H1 (cell line): ENCODE measurements at regions of chr11 and their contacts with region 1.

Region 1: GRCh38 chr11:78228467-78228866 is 39.7 kb downstream of the USP35 start:
- DNase-seq: no peak
- H3K4me3 ChIP-seq: no peak overlapping the region
- H3K27ac ChIP-seq: no peak overlapping the region
- H3K4me1 ChIP-seq: no peaks in the 10 kb centered on the region
- H3K27me3 ChIP-seq: no peaks in the 10 kb centered on the region
- CTCF ChIP-seq: peak in 2 of 3 experiments; percentile 63 to 75; a peak in 3 of 4 replicates
- EP300 ChIP-seq: no peak
- POLR2A ChIP-seq: no peak
- RAD21 ChIP-seq: peak; percentile 87 to 93

Region 2: GRCh38 chr11:78216571-78217287 is 11.7 kb before region 1 on chr11:
- CTCF ChIA-PET with region 1: interaction called, 38 read pairs
- POLR2A ChIA-PET with region 1: no interaction called
- DNase-seq: no peak
- H3K4me3 ChIP-seq: no peak overlapping the region
- H3K27ac ChIP-seq: no peak overlapping the region
- H3K4me1 ChIP-seq: no peaks in the 10 kb centered on the region
- H3K27me3 ChIP-seq: no peaks in the 10 kb centered on the region
- CTCF ChIP-seq: no peak
- EP300 ChIP-seq: no peak
- POLR2A ChIP-seq: no peak
- RAD21 ChIP-seq: no peak

Region 3: GRCh38 chr11:78239781-78240180 is 11.3 kb after region 1 on chr11:
- CTCF ChIA-PET with region 1: interaction called, 11 read pairs
- POLR2A ChIA-PET with region 1: no interaction called
- DNase-seq: no peak
- H3K4me3 ChIP-seq: no peak overlapping the region
- H3K27ac ChIP-seq: no peak overlapping the region
- H3K4me1 ChIP-seq: no peaks in the 10 kb centered on the region
- H3K27me3 ChIP-seq: no peaks in the 10 kb centered on the region
- CTCF ChIP-seq: no peak
- EP300 ChIP-seq: no peak
- POLR2A ChIP-seq: no peak
- RAD21 ChIP-seq: no peak

Region 4: GRCh38 chr11:78416305-78417178 is 188.1 kb after region 1 on chr11:
- CTCF ChIA-PET with region 1: interaction called, 11 read pairs
- POLR2A ChIA-PET with region 1: interaction called, 5 read pairs
- DNase-seq: peak; percentile 50 to 91
- H3K4me3 ChIP-seq: peak overlapping the region; percentile 56 to 72 (median 60)
- H3K27ac ChIP-seq: no peak overlapping the region
- H3K4me1 ChIP-seq: peaks cover 3 to 16% (median 5%) of the 10 kb centered on the region in 4 experiments; a peak in 6 of 7 replicates
- H3K27me3 ChIP-seq: peaks cover 0 to 13% (median 8%) of the 10 kb centered on the region in 4 experiments; a peak in 4 of 7 replicates
- CTCF ChIP-seq: peak; percentile 51 to 55 (median 55)
- EP300 ChIP-seq: no peak
- POLR2A ChIP-seq: no peak; a peak in 2 of 3 replicates
- RAD21 ChIP-seq: peak; percentile 37 to 59; a peak in 3 of 4 replicates

Region 5: GRCh38 chr11:78564490-78565467 is 336.3 kb after region 1 on chr11:
- CTCF ChIA-PET with region 1: interaction called, 25 read pairs
- POLR2A ChIA-PET with region 1: no interaction called
- DNase-seq: no peak
- H3K4me3 ChIP-seq: no peak overlapping the region
- H3K27ac ChIP-seq: no peak overlapping the region
- H3K4me1 ChIP-seq: no peaks in the 10 kb centered on the region
- H3K27me3 ChIP-seq: no peaks in the 10 kb centered on the region
- CTCF ChIP-seq: peak in 2 of 3 experiments; percentile 28 to 46; a peak in 2 of 4 replicates
- EP300 ChIP-seq: no peak
- POLR2A ChIP-seq: no peak
- RAD21 ChIP-seq: peak; percentile 62 to 78